HEK293 (cell line): ENCODE measurements at regions of chr4 and their contacts with region 1.

Region 1: DNA sequence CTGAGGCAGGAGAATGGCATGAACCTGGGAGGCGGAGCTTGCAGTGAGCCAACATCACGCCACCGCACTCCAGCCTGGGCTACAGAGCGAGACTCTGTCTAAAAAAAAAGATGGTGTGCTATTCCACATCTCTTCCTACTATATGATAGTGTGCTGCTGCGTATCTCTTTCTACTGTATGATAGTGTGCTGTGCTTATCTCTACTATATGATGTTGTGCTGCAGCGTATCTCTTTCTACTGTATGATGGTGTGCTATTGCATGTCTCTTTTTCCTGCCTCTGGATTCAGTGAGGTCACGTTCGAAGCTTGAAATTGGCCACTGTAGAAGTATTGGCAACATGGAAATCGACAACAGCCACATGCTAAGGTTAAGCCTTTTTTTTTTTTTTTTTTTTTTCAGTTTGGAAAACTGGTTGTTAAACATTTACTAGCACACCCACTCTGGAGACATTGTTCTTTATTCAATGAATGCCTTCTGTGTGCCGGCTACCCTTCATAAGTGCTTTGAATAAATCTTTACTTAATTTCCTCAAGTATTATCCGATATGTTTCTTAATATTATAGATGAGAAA is 31.0 kb downstream of the ARFIP1 start:
- H3K4me3 ChIP-seq: no peak overlapping the region
- H3K27ac ChIP-seq: no peak overlapping the region
- H3K4me1 ChIP-seq: no peaks in the 10 kb centered on the region
- CTCF ChIP-seq: no peak

Region 2: GRCh38 chr4:152696764-152697261 is 114.0 kb before region 1 on chr4:
- CTCF ChIA-PET with region 1: no interaction called
- POLR2A ChIA-PET with region 1: no interaction called
- H3K4me3 ChIP-seq: no peak overlapping the region
- H3K27ac ChIP-seq: no peak overlapping the region
- H3K4me1 ChIP-seq: no peaks in the 10 kb centered on the region
- CTCF ChIP-seq: no peak

Region 3: DNA sequence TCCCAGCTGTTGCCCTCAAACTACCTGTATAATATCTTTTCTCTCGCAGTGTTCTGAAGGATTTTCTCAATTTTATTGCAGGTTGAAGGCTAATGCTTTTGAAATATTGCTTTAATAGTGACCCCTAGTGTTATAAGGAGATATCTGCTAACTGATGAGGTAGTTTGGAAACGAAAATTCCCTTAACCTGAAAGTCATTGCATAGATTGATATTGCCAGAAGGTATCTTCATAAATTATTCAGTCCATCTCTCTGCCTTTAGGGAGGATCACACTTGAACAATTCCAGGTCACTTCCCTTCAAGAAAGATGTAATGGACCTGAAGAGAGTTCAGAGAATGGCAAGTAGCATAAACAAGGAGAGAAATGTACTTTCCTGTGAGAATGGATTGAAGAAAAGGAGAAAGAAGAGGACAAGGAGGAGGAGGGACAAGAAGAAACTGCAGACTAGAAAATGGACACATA is 75.4 kb before region 1 on chr4:
- CTCF ChIA-PET with region 1: no interaction called
- POLR2A ChIA-PET with region 1: interaction called, 11 read pairs
- H3K4me3 ChIP-seq: no peak overlapping the region
- H3K27ac ChIP-seq: no peak overlapping the region
- H3K4me1 ChIP-seq: no peaks in the 10 kb centered on the region
- CTCF ChIP-seq: no peak

Region 4: GRCh38 chr4:153013202-153013977 is 202.6 kb after region 1 on chr4:
- CTCF ChIA-PET with region 1: no interaction called
- POLR2A ChIA-PET with region 1: no interaction called
- H3K4me3 ChIP-seq: no peak overlapping the region
- H3K27ac ChIP-seq: no peak overlapping the region
- H3K4me1 ChIP-seq: no peaks in the 10 kb centered on the region
- CTCF ChIP-seq: no peak

Region 5: GRCh38 chr4:153198719-153199118 is 387.9 kb after region 1 on chr4:
- CTCF ChIA-PET with region 1: no interaction called
- POLR2A ChIA-PET with region 1: no interaction called
- H3K4me3 ChIP-seq: no peak overlapping the region
- H3K27ac ChIP-seq: no peak overlapping the region
- H3K4me1 ChIP-seq: no peaks in the 10 kb centered on the region
- CTCF ChIP-seq: no peak